ENCODE measurements at regions of chr1 and their contacts with region 1.

Region 1: DNA sequence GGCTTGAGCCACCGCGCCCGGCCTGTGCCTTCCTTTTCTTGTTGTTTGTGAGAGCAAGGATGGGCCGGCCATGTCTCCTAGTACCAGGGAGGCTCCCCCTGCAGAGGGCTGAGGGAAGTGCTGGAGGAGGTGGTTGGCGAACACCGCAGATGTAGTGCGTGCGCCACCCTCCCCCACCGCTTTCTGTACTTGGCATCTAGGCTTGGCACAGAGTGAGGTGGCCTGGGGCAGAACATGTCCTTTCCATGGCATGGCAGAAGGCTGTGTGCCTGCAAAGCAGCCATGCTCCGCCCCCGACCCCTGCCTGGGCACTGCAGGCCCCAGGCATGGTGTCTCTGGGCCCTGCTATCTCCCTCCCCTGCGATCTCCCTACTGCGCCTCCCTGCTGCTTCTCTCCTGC is 30.7 kb downstream of the ALPL start:
- DNase-seq: peak; percentile 79
- ATAC-seq: peak; percentile 89
- H3K4me3 Mint-ChIP-seq: no peak overlapping the region
- H3K27ac Mint-ChIP-seq: no peak overlapping the region
- H3K4me1 Mint-ChIP-seq: peaks cover 46% of the 10 kb centered on the region
- H3K27me3 Mint-ChIP-seq: no peaks in the 10 kb centered on the region
- CTCF ChIP-seq: peak; percentile 55

Region 2: DNA sequence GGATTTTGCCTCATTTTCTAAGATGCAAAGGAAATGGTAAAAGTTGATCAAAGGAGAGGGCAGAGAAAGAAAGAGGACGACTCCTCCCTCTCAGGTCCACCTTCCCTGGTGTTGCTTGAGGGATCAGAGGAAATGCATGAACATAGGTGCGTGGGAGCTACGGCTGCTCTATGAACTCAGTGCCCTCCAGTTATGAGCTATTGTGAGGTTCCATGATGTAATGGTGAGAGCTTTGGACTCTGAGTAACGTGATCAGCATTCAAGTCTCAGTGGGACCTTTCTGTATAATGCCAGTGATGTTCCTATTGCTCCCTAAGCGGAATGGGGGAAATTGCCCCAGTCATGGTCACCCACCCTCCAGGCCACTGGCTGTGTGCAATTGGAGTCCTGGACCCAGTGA is 125.9 kb before region 1 on chr1:
- CTCF ChIA-PET with region 1: no interaction called
- POLR2A ChIA-PET with region 1: no interaction called
- DNase-seq: no peak
- ATAC-seq: no peak
- H3K4me3 Mint-ChIP-seq: no peak overlapping the region
- H3K27ac Mint-ChIP-seq: no peak overlapping the region
- H3K4me1 Mint-ChIP-seq: peaks cover 9% of the 10 kb centered on the region
- H3K27me3 Mint-ChIP-seq: peaks cover 85% of the 10 kb centered on the region
- CTCF ChIP-seq: no peak

Region 3: DNA sequence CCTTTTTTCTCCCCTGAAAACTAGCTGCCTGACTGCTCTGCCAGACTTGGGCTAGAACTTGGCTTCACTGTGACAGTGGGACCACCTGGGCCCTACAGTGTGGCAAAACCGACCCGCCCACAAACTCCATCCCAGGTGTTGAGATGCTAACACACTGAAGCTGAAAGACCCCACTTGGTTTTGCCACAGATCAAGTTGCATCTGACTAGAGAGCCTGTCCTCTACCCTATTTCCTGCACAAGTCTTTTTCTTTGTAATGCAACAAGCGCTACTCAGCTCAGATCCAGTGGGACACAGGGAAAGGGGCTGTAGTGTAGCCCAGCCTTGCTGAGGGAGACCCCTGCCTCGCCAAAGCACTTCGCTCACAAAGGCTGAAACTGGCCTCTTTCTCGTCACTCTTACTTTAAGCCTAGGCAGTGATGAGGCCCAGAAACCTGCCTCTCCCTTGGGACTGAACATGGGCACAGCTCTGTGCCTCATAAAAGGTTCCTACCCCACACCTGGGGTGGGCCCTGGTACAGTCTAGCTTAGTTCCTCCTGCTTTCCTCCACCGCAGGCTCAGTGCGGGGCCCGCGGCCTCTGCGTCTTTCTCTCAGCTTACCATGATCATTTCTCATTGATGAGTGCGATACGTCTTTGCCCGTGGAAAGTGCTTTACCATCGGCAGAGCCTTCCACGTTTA is 21.0 kb before region 1 on chr1:
- CTCF ChIA-PET with region 1: interaction called, 10 read pairs
- POLR2A ChIA-PET with region 1: no interaction called
- DNase-seq: no peak
- ATAC-seq: peak; percentile 88
- H3K4me3 Mint-ChIP-seq: peak overlapping the region; percentile 41; the same call in 1 of the 2 replicates
- H3K27ac Mint-ChIP-seq: peak overlapping the region; percentile 96
- H3K4me1 Mint-ChIP-seq: peaks cover 54% of the 10 kb centered on the region
- H3K27me3 Mint-ChIP-seq: no peaks in the 10 kb centered on the region
- CTCF ChIP-seq: no peak

Region 4: DNA sequence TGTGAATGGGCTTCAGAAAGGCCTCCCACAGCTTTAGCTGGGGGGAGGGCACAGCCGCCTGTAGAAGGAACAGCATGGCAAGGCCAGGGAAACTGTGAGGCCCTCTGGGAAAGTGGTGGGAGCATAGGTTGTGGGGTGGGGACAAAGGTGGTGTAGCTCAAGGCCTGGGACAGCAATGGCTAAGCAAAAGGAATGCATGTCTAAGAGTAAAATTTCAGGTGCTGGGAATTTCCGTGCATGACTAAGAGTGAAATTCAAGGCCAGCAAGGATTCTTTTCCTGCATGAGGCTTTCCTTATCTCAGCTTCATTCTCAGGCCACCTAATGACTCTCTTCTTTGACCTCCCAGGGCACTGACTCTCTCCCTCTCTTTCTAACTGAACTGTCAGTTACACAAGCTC is 689.4 kb after region 1 on chr1:
- CTCF ChIA-PET with region 1: no interaction called
- POLR2A ChIA-PET with region 1: no interaction called
- DNase-seq: no peak
- ATAC-seq: no peak
- H3K4me3 Mint-ChIP-seq: no peak overlapping the region
- H3K27ac Mint-ChIP-seq: no peak overlapping the region
- H3K4me1 Mint-ChIP-seq: peaks cover 12% of the 10 kb centered on the region
- H3K27me3 Mint-ChIP-seq: no peaks in the 10 kb centered on the region
- CTCF ChIP-seq: no peak

Measured in WTC11 (cell line).